Right lobe of liver (tissue), 6 donors: ENCODE measurements at regions of chr13 and their contacts with region 1.

Region 1: DNA sequence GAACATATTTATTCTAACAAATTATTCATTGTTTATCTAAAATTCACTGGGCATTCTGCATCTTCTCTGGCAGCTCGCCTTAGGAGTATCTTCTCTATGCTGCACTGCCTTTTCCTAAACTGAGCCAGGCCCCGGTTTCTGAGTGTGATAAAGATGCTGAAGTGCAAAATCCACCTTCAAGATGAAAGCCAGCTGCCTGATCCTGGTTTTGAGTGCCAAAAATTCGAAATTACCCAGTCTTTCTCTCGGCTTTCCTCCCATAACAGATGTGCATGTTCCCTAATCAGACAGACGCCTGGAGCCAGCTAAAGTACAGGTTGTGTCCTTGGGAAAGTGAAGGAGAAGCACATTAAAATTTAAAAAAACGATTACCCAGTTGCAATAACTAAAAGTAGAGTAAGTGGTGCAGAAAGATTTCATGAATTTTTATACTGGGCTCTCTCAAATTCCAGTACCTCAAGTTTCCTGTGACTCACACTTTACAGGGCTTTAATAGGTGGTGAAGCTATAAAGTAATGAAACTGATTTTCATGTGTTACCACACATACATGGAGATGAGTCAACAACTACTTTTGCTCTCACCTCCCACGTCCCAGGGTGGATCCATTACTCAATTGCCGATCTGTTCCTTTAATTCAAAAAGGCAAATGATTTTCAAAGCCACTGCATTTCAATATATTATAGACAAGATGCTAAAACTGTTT is 65.0 kb upstream of the GTF2F2 start:
- DNase-seq: no peak
- ATAC-seq: peak in 1 of 4 donors; percentile 22
- H3K4me3 ChIP-seq: no peak overlapping the region
- H3K27ac ChIP-seq: no peak overlapping the region
- H3K4me1 ChIP-seq: no peaks in the 10 kb centered on the region
- H3K27me3 ChIP-seq: no peaks in the 10 kb centered on the region
- CTCF ChIP-seq: no peak
- POLR2A ChIP-seq: no peak

Region 2: DNA sequence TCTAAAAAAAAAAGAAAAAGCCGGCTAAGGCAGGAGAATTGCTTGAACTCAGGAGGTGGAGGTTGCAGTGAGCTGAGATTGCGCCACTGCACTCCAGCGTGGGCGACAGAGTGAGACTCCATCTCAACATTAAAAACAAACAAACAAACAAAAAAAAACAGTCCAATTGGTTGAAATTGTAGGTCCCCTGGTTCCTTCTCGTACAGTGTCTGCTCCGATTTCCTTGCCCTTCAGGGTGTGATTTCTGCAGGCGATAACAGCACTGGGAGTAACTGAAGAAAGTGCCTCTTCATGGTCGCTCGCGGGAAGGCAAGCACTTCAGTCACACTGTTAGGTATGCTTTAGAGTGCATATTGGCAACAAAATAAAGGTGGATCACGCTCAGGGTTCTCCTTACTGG is 245.9 kb after region 1 on chr13:
- intact Hi-C with region 1: loop called in 1 of 2 experiments (anchors 10 kb)
- DNase-seq: no peak
- ATAC-seq: no peak
- H3K4me3 ChIP-seq: no peak overlapping the region
- H3K27ac ChIP-seq: no peak overlapping the region
- H3K4me1 ChIP-seq: no peaks in the 10 kb centered on the region
- H3K27me3 ChIP-seq: no peaks in the 10 kb centered on the region
- CTCF ChIP-seq: no peak
- POLR2A ChIP-seq: no peak